ENCODE measurements at regions of chrX and their contacts with region 1.

Region 1: DNA sequence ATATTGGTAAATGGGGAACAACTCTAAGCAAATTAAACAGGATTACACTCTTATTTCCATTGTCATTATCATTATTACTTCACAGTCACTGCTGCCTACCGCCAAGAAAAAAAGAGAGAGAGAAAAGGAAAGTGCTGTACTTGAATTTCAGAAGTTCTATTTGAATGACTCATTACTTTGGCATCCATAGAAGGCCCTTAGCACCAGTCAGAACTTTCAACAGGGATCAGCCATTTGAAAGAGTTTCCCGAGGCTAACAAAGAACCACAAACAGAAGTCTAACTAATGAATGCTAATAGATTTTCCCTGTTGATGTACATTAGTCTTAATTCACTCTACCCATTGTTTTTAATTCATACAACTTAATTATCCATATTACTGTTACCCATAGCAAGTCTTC is 116.3 kb downstream of the SHROOM4 start:
- DNase-seq: peak; percentile 79
- ATAC-seq: peak; percentile 84
- H3K4me3 ChIP-seq: no peak overlapping the region
- H3K27ac ChIP-seq: no peak overlapping the region
- H3K4me1 ChIP-seq: peaks cover 3% of the 10 kb centered on the region; the same call in 1 of the 2 replicates
- H3K27me3 ChIP-seq: no peaks in the 10 kb centered on the region
- CTCF ChIP-seq: no peak
- POLR2A ChIP-seq: no peak
- RAD21 ChIP-seq: no peak

Region 2: DNA sequence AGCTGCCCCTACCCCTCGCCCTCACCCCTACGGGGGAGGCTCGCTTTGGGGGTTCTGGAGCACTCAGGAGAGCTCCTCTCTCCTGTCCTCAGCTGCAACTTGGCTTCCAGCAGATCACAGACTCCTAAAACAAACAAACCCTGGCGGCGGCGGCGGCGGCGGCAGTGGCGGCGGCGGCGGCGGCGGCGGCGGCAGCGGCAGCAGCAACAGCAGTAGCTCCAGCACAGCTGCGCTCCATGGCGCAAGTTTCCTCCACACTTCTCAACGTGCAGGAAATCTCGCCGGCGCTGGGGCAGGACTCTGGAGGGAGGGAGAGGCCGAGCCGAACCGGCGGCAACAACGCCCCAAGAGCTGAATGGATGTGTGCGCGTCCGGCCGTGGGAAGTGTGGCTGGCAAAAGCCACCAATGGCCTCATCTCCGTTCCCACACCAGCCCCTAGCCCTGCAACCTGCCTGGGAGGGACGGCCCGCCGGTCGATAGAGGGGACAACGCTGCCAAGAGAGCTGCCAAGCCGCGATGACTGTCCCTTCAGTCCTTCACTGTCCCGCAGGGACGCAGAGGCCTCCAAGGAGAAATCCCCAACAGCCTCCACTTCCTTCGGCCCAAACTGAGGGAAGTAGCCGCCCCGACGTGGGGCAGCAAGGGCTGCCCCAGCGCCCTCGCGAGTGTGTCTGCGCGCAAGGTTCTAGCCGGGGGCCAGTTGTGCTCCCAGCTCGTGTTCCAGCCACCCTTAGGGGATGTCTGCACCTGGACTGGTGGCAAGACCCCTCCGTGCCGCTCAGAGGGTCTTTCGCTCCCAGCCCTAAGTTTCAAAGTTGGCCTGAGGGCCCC is 115.5 kb after region 1 on chrX:
- CTCF ChIA-PET with region 1: no interaction called
- POLR2A ChIA-PET with region 1: no interaction called
- dilution Hi-C with region 1: no loop called
- in situ Hi-C with region 1: no loop called
- intact Hi-C with region 1: loop called (anchors 5 kb)
- DNase-seq: peak; percentile 46
- ATAC-seq: peak; percentile 61
- H3K4me3 ChIP-seq: peak overlapping the region; percentile 50
- H3K27ac ChIP-seq: no peak overlapping the region; the same call in 1 of the 2 replicates
- H3K4me1 ChIP-seq: no peaks in the 10 kb centered on the region
- H3K27me3 ChIP-seq: no peaks in the 10 kb centered on the region; the same call in 1 of the 2 replicates
- CTCF ChIP-seq: no peak
- POLR2A ChIP-seq: no peak
- RAD21 ChIP-seq: no peak